WTC11 (cell line): ENCODE measurements at regions of chr1 and their contacts with region 1.

Region 1: DNA sequence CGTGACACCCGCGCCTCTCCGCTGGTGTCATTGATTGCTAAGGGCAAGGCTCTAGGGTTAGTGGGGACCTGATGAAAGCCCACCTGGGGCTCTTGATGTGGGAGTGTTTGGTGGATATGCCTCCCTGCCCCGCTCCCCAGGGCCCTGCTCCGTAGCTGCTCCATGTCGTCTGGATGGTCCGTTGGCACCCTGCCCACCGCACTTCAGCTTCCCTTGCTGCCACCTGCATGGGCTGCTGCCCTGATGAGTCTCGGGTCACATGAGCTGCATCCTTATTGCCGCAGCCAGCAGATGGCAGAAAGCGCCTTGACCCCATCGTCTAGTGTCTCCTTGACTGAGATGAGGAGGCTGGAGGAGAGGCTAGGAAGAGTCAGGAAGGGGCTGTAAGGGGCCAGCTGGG is 439.4 kb downstream of the CAMTA1 start:
- DNase-seq: peak; percentile 50
- ATAC-seq: peak; percentile 69
- H3K4me3 Mint-ChIP-seq: no peak overlapping the region
- H3K27ac Mint-ChIP-seq: no peak overlapping the region
- H3K4me1 Mint-ChIP-seq: no peaks in the 10 kb centered on the region
- H3K27me3 Mint-ChIP-seq: no peaks in the 10 kb centered on the region
- CTCF ChIP-seq: no peak

Region 2: GRCh38 chr1:7199077-7199779 is 25.4 kb before region 1 on chr1:
- CTCF ChIA-PET with region 1: no interaction called
- POLR2A ChIA-PET with region 1: no interaction called
- DNase-seq: peak; percentile 35
- ATAC-seq: peak; percentile 67
- H3K4me3 Mint-ChIP-seq: no peak overlapping the region
- H3K27ac Mint-ChIP-seq: no peak overlapping the region
- H3K4me1 Mint-ChIP-seq: peaks cover 10% of the 10 kb centered on the region
- H3K27me3 Mint-ChIP-seq: no peaks in the 10 kb centered on the region; the same call in 1 of the 2 replicates
- CTCF ChIP-seq: no peak

Region 3: GRCh38 chr1:7516341-7516740 is 291.7 kb after region 1 on chr1:
- CTCF ChIA-PET with region 1: interaction called, 13 read pairs
- POLR2A ChIA-PET with region 1: no interaction called
- DNase-seq: peak; percentile 57
- ATAC-seq: peak; percentile 95
- H3K4me3 Mint-ChIP-seq: no peak overlapping the region
- H3K27ac Mint-ChIP-seq: no peak overlapping the region
- H3K4me1 Mint-ChIP-seq: no peaks in the 10 kb centered on the region
- H3K27me3 Mint-ChIP-seq: no peaks in the 10 kb centered on the region
- CTCF ChIP-seq: no peak

Region 4: GRCh38 chr1:7698641-7699040 is 474.0 kb after region 1 on chr1:
- CTCF ChIA-PET with region 1: no interaction called
- POLR2A ChIA-PET with region 1: no interaction called
- DNase-seq: no peak
- ATAC-seq: no peak
- H3K4me3 Mint-ChIP-seq: no peak overlapping the region
- H3K27ac Mint-ChIP-seq: no peak overlapping the region
- H3K4me1 Mint-ChIP-seq: peaks cover 16% of the 10 kb centered on the region
- H3K27me3 Mint-ChIP-seq: peaks cover 38% of the 10 kb centered on the region
- CTCF ChIP-seq: no peak